Posterior cingulate gyrus (tissue), 11 donors: ENCODE measurements at regions of chr7 and their contacts with region 1.

Region 1: DNA sequence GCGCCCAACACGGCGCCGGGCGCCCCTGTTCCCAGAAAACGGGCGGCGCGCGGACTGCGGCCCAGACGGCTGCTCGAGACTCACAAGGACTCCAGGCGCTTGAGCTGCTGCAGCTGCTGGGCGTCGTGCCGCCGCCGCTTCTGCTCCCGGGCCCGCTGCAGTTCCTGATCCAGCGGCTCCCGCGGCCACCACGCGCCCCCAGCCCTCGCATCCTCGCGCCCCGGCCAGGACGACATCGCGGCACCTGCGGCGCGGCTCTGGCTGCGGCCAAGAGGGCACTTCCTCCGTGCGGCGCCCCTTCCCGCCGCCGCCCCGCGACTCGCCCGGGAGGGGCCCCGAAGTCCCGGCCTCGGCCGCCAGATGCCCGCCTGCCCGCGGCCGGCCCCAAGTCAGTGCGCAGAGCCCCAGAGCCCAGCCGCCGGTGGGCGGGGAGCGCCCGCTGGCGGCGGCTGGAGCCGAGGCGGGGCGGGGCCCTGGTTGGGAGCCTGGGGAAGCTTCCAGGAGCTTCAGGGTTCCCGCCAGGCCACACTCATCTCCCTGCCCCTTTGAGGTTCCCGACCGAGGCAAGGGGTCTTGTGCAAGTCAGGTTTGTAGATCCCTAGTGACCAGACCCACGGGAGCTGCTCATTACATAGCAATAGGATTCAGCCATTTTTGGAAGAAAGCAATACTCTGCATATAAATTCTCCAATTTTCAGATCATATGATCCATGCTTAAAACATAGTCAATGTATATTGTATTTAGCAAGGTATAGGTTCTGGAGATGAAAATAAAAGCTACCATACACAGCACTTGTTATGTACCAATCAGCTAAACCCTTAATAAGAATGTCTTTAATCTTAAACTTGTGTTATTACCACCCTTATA is 14.2 kb upstream of the FKBP9 start:
- DNase-seq: peak; percentile 68 to 97 (median 78)

Region 2: GRCh38 chr7:32846701-32847100 is 96.3 kb before region 1 on chr7:
- intact Hi-C with region 1: loop called (anchors 1 kb)
- DNase-seq: peak; percentile 66 to 94 (median 83)

Region 3: DNA sequence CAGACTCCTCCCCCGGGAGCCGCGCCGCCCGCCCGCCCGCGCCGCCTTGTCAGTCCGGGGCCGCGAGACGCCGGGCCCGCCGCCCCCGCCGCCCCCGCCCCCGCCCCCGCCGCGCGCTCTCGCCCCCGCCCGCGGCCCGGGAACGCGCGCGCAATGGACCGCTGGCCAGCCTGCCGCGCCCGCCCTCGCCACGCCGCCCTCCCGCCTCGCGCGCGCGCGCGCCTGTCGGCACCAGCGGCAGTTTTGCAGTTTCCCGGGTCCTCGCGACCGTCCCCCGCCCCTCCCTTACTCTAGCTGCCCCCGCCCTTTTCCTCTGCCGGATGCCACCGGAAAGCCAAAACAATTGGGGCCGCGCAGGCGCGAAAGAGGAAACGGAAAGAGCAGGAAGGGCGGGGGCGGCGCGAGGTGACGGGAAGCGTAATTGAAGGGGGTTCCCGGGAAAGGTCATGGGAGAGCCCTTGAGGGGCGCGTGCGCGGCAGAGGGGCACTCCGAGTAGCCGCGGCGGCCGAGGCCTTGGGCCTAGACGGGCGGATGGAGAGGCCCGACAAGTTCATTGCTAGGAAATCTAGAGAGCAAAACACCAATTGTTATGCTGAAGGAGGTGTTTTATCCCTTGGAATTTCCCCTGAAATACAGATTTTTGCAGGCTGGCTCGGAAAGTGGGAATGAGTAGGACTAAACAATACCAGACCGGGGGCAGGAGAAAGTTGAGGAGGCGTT is 51.1 kb before region 1 on chr7:
- intact Hi-C with region 1: loop called (anchors 1 kb)
- DNase-seq: peak; percentile 93 to 99 (median 94)

Region 4: DNA sequence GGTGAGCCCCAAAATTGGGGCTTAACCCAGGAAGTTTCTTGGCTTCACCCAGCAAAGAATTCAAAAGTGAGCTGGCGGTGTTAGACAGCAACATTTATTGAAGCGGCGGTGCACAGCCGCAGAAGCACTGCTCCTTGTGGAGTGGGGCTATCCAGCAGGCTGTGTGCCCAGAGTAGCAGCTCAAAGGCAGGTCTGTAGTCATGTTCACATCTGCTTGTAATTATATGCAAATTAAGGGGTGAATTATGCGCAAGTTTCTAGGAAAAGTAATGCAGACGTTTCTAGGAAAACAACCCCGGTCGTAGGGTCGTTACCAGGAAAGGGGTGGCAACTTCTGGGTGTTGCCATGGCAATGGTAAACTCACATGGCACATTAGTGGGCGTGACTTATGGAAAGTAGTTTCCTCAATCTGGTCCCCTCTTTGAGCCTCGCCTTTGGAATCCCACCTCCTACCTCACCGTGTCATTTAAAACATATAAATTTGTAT is 37.8 kb before region 1 on chr7:
- intact Hi-C with region 1: no loop called
- DNase-seq: peak; percentile 31 to 95 (median 56)

Region 5: GRCh38 chr7:32957326-32958045 is 14.5 kb after region 1 on chr7 and contains the start of gene FKBP9:
- intact Hi-C with region 1: loop called (anchors 2 kb)
- DNase-seq: peak; percentile 51 to 96 (median 70)